Mammary epithelial cell (primary cell): ENCODE measurements at regions of chr7 and their contacts with region 1.

Region 1: DNA sequence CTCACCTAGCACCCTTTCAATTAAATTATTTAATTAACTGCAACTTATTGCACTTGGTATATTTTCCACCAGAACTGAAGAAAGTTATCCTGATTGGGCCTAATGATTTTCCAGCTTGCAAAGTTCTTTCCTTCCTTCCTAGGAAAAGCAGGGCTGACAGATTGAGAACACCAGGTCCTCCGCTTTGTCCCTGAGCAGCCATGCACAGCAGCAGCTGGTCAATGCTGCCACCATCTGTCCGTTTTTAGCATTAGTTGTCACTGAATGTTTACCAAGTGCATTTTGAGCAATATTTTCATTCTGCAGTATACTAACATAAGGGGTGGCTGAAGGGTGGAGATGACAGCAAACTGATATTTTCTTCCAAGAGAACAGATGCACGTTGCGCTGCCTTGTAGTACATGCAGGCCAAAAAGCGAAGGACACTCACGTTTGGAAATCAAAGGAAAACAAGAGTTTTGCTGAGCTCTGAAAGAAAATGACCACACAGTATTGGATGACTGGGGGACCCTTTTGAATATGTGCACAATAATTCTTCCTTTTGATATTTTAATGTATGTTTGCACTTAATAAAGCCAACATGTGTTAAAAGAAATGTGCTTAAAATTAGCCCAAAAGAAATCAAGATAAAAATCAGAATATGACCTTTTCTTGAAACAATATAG is 248.8 kb upstream of the PTN start:
- DNase-seq: peak; percentile 54
- H3K4me3 ChIP-seq: no peak overlapping the region
- H3K27ac ChIP-seq: no peak overlapping the region
- H3K4me1 ChIP-seq: peaks cover 12% of the 10 kb centered on the region
- H3K27me3 ChIP-seq: peaks cover under 1% of the 10 kb centered on the region
- CTCF ChIP-seq: peak; percentile 92 to 96

Region 2: DNA sequence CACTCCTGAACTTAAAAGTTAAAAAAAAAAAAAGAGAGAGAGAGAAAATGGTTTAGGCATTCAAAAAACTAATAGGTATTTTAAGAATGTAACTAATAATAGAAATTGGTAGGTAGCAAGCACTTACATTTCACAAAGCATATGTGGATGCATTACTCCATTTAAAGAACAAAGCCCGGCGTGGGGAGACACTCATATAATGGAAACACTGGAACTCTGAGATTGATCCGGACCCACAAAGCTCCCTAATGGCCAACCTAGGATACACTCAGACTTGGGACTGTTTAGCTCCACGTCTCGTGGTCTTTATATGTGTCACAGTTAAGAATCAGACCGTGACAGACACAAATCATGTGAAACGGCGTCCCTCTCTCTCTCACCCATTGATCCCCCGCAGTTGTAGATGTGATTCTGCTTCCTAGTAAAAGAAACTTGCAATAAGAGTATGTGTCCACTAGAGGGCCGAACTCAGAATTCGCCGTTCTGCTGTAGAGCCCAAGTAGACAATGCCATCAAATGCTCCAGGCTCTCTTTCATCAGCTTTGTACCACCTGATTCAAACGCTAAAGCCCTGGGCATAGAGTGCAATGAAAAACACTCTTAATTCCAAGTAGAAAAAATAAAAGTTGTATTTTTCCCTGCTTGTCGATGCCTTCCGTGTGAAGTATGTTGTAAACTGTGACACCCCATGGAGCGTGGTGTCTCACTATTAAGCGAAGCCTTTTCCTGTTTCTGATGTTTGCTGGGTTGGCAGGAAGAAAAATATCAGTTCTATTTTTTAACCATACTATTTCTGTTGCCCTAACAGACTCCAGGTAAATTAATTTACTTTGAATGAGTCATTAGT is 1186.2 kb before region 1 on chr7:
- CTCF ChIA-PET with region 1: no interaction called
- dilution Hi-C with region 1: no loop called
- in situ Hi-C with region 1: no loop called
- intact Hi-C with region 1: loop called (anchors 1 kb)
- DNase-seq: peak; percentile 35
- H3K4me3 ChIP-seq: no peak overlapping the region
- H3K27ac ChIP-seq: no peak overlapping the region
- H3K4me1 ChIP-seq: no peaks in the 10 kb centered on the region
- H3K27me3 ChIP-seq: no peaks in the 10 kb centered on the region
- CTCF ChIP-seq: peak; percentile 61 to 79

Region 3: GRCh38 chr7:137169282-137169698 is 423.1 kb before region 1 on chr7:
- CTCF ChIA-PET with region 1: interaction called, 14 read pairs
- dilution Hi-C with region 1: no loop called
- in situ Hi-C with region 1: loop called (anchors 10 to 25 kb)
- intact Hi-C with region 1: loop called (anchors 1 kb)
- DNase-seq: peak; percentile 29
- H3K4me3 ChIP-seq: no peak overlapping the region
- H3K27ac ChIP-seq: no peak overlapping the region
- H3K4me1 ChIP-seq: no peaks in the 10 kb centered on the region
- H3K27me3 ChIP-seq: no peaks in the 10 kb centered on the region
- CTCF ChIP-seq: peak; percentile 84 to 88

Region 4: DNA sequence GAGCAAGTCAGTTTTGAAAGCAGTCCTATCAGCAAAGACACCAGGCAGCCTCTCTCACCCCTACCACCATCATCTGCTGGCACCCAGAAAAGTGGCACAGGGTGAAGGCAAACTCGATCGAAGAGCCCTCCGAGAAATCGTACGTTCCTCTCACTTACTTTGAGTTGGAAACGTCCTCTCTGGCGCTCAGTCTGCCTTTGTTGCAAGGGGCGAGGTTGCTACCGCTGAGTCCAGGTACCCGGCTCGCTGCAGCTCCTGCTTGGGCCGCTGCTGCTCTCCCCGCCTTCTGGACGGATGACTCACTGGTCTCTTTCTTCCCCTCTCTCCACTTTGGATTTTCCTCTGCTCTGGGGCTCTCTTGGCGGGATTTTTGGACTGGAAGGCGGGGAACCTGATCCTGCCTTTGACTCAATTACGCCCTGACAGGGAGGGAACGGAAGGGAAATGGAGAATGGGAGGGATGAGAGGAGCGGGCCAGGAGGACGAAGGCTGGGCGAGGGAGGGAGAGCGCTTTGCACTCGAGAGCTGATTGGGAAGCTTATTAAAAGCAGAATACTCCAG is 249.0 kb before region 1 on chr7 and contains the start of gene PTN:
- CTCF ChIA-PET with region 1: no interaction called
- dilution Hi-C with region 1: no loop called
- in situ Hi-C with region 1: no loop called
- intact Hi-C with region 1: loop called (anchors 10 kb)
- DNase-seq: peak; percentile 70
- H3K4me3 ChIP-seq: peak within 1 kb of the TSS; percentile 24 to 50 (median 31)
- H3K27ac ChIP-seq: no peak within 1 kb of the TSS
- H3K4me1 ChIP-seq: peaks cover 13% of the 10 kb centered on the region
- H3K27me3 ChIP-seq: no peaks in the 10 kb centered on the region
- CTCF ChIP-seq: peak in 1 of 2 donors; percentile 1
- total RNA-seq, gene PTN: 3.2 to 4.3 TPM

Region 5: DNA sequence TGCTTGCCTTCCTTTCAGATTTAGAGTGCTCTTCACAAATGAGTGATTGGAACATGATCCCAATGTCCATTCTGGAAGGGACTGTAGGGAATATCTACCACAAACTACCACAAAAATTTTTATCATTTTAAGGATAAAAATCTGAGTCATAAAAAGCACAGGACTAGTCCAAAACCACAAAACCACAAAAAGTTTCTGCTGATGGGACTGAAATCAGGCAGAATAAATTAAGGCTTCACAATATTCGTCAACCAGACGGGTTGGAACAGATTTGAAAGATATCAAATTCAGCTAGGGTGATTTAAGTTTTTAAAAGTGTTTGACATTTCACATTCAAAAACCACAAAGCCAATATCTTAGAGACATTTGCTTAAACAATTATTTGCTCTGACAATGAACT is 148.7 kb before region 1 on chr7:
- CTCF ChIA-PET with region 1: no interaction called
- dilution Hi-C with region 1: no loop called
- in situ Hi-C with region 1: no loop called
- intact Hi-C with region 1: no loop called
- DNase-seq: peak; percentile 81
- H3K4me3 ChIP-seq: no peak overlapping the region
- H3K27ac ChIP-seq: no peak overlapping the region
- H3K4me1 ChIP-seq: peaks cover 5% of the 10 kb centered on the region
- H3K27me3 ChIP-seq: peaks cover 2% of the 10 kb centered on the region
- CTCF ChIP-seq: no peak

Region 6: DNA sequence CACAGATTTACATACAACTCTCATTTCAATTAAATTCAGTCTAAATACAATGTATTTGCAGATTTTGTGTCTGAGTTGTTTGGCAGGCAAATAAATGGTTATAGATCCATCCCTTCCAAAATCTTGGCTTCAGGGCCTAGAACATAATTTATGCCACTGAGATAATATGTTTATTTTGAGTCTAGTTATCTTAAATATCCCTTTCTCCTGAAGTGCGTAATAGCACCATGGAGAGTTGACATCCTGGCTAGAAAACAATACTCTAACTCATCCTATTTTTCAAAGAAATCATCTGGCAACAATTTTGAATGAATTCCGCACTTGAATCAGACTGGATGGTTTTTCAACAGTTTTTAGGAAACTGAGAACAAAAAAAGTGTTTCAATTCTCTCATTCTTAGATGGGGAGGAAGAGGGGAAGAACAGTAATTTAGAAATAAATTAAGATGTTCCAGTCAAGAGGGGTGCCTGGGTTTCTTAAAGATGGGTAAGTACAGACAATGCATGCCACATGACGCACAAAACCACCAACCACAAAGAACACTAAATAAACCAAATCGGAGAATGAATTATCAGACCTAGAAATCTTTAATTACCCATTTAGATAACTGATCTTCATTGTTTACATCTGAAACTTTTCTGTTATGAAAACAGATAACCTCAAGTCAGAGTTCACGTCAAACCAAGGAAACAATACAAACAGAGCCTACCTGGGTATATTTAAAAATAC is 20.1 kb before region 1 on chr7:
- CTCF ChIA-PET with region 1: no interaction called
- dilution Hi-C with region 1: no loop called
- in situ Hi-C with region 1: no loop called
- intact Hi-C with region 1: no loop called
- DNase-seq: peak; percentile 30
- H3K4me3 ChIP-seq: no peak overlapping the region
- H3K27ac ChIP-seq: no peak overlapping the region
- H3K4me1 ChIP-seq: peaks cover 9% of the 10 kb centered on the region
- H3K27me3 ChIP-seq: no peaks in the 10 kb centered on the region
- CTCF ChIP-seq: no peak

Region 7: GRCh38 chr7:138089080-138089991 is 497.0 kb after region 1 on chr7:
- CTCF ChIA-PET with region 1: no interaction called
- dilution Hi-C with region 1: no loop called
- in situ Hi-C with region 1: no loop called
- intact Hi-C with region 1: no loop called
- DNase-seq: peak; percentile 48
- H3K4me3 ChIP-seq: no peak overlapping the region
- H3K27ac ChIP-seq: no peak overlapping the region
- H3K4me1 ChIP-seq: peaks cover 3% of the 10 kb centered on the region
- H3K27me3 ChIP-seq: no peaks in the 10 kb centered on the region
- CTCF ChIP-seq: no peak